ENCODE measurements at regions of chr16 and their contacts with region 1.

Region 1: DNA sequence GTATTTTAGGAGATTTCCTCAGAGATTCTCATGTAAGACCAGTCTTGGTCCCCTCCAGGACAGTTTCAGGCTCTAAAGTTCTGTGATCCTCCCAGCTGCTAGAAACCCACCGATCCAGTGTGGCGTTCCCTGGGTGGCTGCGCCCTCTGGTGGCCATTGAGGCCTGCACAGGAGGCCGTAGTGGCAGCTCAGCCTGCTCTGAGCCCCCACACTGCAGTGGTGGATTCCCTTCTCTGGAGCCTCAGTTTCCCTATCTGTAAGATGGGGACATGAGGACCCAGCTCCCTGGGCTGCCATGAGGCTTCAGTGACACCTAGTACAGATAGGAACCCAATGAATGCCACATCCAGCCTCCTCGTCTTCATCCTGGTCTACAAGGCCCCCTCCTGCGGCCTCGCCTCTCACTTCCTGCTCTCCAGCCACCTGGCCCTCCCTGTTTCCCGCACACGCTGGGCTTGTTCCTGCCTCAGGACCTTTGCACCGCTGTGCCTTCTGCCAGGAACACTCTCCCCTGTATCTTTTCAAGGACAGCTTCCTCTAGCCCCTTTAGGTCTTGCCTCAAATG is 16.5 kb downstream of the CCDC102A start:
- DNase-seq: peak; percentile 58 to 90 (median 83)
- ATAC-seq: peak; percentile 99
- H3K4me3 ChIP-seq: no peak overlapping the region
- H3K4me3 Mint-ChIP-seq: no peak overlapping the region
- H3K27ac ChIP-seq: no peak overlapping the region
- H3K27ac Mint-ChIP-seq: no peak overlapping the region
- H3K4me1 ChIP-seq: no peaks in the 10 kb centered on the region
- H3K4me1 Mint-ChIP-seq: peaks cover 6% of the 10 kb centered on the region
- H3K27me3 ChIP-seq: no peaks in the 10 kb centered on the region
- H3K27me3 Mint-ChIP-seq: no peaks in the 10 kb centered on the region
- CTCF ChIP-seq: peak; percentile 94

Region 2: DNA sequence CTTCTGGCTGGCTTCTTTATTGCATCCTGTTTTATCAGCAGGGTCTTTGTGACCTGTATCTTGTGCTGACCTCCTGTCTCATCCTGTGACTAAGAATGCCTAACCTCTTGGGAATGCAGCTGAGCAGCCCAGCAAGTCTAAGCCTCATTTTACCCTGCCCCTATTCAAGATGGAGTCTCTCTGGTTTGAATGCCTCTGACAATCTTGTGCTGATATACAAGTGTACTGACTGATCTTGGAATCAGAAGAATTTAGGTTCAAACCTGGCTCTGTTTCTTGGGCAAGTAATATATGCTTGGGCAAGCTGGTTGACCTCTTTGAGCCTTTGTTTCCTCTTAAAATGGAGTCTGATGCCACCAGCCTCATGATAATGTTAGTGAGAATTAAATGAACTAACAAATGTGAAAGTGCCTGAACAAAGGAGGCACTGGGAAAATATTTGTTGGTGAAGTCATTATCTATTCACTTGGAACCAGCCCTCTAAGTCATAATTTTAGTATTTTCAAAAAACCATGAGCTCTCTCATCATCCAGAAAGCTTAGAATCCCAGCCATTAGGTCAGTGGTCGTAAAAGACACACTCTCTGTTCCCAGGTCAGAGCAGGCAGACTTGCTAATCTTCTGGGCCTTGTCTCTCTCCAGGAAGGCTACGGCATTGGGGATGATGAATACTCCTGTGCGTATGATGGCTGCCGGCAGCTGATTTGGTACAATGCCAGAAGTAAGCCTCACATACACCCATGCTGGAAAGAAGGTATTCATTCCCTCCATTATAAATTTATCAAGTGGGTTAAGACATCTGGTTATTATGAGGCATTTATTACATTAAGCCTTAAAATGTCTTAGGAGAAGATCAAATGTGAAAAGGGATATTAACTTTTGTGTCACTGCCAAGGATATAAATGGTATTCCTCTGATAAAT is 292.9 kb before region 1 on chr16:
- CTCF ChIA-PET with region 1: no interaction called
- POLR2A ChIA-PET with region 1: no interaction called
- intact Hi-C with region 1: no loop called
- DNase-seq: no peak
- ATAC-seq: no peak
- H3K4me3 ChIP-seq: no peak overlapping the region
- H3K4me3 Mint-ChIP-seq: no peak overlapping the region
- H3K27ac ChIP-seq: no peak overlapping the region
- H3K27ac Mint-ChIP-seq: no peak overlapping the region
- H3K4me1 ChIP-seq: no peaks in the 10 kb centered on the region
- H3K4me1 Mint-ChIP-seq: no peaks in the 10 kb centered on the region
- H3K27me3 ChIP-seq: no peaks in the 10 kb centered on the region
- H3K27me3 Mint-ChIP-seq: no peaks in the 10 kb centered on the region
- CTCF ChIP-seq: no peak

Region 3: DNA sequence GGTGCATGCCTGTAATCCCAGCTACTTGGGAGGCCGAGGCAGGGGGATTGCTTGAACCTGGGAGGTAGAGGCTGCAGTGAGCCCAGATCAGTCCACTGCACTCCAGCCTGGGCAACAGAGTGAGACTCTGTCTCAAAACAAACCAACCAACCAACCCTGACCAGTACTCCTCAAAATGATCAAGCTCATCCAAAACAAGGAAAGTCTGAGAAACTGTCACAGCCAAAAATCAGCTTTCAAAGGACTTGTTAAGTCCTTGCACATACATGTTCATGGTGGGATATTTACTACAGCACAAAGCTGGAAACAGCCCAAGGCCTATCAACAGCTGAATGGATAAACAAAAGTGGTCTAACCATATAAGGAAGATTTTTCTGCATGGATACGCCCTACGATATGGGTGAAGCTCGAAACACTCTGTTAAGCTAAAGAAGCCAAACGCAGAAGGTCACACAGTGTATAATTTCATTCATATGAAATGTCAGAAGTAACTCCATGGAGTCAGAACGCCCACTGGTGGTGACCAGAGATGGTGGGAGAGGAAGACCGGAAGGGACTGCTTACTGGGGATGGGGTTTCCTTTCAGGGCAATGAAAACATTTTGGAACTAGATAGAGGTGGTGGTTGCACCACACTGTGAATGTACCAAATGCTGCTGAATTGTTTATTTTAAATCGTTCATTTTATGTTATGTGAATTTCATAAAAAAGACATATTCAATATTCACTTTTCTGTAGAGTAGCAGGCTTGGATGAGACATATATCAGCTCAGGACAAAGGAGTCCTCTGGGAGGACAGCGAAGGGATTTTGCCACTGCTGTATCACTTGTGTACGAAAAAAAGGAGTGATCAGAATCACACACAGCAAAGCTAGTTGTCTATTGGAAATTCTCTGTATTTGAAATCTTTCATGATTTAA is 97.6 kb before region 1 on chr16:
- CTCF ChIA-PET with region 1: interaction called, 137 read pairs
- POLR2A ChIA-PET with region 1: interaction called, 3 read pairs
- intact Hi-C with region 1: loop called in 1 of 2 experiments (anchors 1 kb)
- DNase-seq: no peak
- ATAC-seq: no peak
- H3K4me3 ChIP-seq: no peak overlapping the region
- H3K4me3 Mint-ChIP-seq: no peak overlapping the region
- H3K27ac ChIP-seq: no peak overlapping the region
- H3K27ac Mint-ChIP-seq: no peak overlapping the region
- H3K4me1 ChIP-seq: peaks cover 18% of the 10 kb centered on the region
- H3K4me1 Mint-ChIP-seq: peaks cover 19% of the 10 kb centered on the region
- H3K27me3 ChIP-seq: no peaks in the 10 kb centered on the region
- H3K27me3 Mint-ChIP-seq: no peaks in the 10 kb centered on the region
- CTCF ChIP-seq: no peak

Region 4: GRCh38 chr16:57475711-57476339 is 44.1 kb before region 1 on chr16:
- CTCF ChIA-PET with region 1: interaction called, 28 read pairs
- POLR2A ChIA-PET with region 1: interaction called, 5 read pairs
- intact Hi-C with region 1: loop called (anchors 1 kb)
- DNase-seq: peak in 8 of 9 experiments; percentile 44 to 84 (median 79)
- ATAC-seq: peak; percentile 98
- H3K4me3 ChIP-seq: peak overlapping the region in 1 of 2 experiments; percentile 21
- H3K4me3 Mint-ChIP-seq: peak overlapping the region; percentile 39
- H3K27ac ChIP-seq: no peak overlapping the region
- H3K27ac Mint-ChIP-seq: no peak overlapping the region
- H3K4me1 ChIP-seq: peaks cover 15% of the 10 kb centered on the region
- H3K4me1 Mint-ChIP-seq: peaks cover 13% of the 10 kb centered on the region
- H3K27me3 ChIP-seq: no peaks in the 10 kb centered on the region
- H3K27me3 Mint-ChIP-seq: no peaks in the 10 kb centered on the region
- CTCF ChIP-seq: peak; percentile 87

Region 5: DNA sequence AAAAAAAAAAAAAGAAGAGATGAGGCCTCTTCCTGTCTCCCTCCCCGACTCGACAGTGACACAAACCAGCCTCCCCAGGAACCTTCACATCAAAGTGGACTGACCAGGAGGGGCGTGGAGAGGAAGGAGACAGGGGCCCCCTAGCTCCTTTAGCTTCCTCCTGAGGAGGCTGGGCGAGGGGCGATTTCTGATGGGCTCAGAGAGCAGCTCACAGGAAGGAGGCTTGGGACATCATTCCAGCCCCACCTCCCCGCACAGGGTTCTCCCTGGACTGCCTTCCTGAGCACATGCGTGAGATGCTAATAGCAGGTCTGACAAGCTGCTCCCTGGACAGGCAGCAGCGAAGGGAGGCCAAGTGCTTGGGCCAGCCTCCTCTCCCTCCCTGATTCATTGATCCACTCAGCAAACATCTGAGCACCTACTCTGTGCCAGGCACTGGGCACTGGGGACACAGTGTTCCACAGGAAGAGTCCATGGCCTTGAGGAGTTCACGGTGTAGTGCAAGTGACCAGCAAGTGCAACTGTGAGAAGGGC is 19.2 kb before region 1 on chr16:
- CTCF ChIA-PET with region 1: interaction called, 21 read pairs
- POLR2A ChIA-PET with region 1: interaction called, 4 read pairs
- intact Hi-C with region 1: no loop called
- DNase-seq: peak in 1 of 9 experiments; percentile 34
- ATAC-seq: no peak
- H3K4me3 ChIP-seq: no peak overlapping the region
- H3K4me3 Mint-ChIP-seq: no peak overlapping the region
- H3K27ac ChIP-seq: no peak overlapping the region
- H3K27ac Mint-ChIP-seq: no peak overlapping the region
- H3K4me1 ChIP-seq: peaks cover 16% of the 10 kb centered on the region
- H3K4me1 Mint-ChIP-seq: peaks cover 10% of the 10 kb centered on the region
- H3K27me3 ChIP-seq: no peaks in the 10 kb centered on the region
- H3K27me3 Mint-ChIP-seq: peaks cover 4% of the 10 kb centered on the region
- CTCF ChIP-seq: no peak

Region 6: DNA sequence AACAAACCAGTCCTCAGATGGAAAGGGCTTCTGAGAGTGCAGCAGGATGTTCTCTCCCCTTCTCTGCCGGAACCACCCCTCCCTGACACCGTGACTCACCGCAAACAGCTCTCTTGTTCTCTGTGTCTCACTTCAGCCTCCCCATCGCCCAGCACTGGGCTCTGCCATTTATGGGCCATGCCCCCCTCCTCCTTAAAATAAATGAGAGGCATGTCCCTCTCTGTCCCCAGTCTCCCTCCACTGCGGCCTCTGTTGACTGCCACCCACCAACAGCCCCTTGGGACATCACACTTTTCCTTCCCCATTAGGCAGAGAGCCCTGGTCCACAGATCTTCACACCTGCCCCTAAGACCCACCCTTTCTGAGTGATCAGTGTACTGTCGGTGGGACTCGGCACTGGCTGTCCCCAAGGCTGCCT is 10.2 kb after region 1 on chr16:
- CTCF ChIA-PET with region 1: interaction called, 43 read pairs
- POLR2A ChIA-PET with region 1: no interaction called
- intact Hi-C with region 1: no loop called
- DNase-seq: peak; percentile 26 to 89 (median 81)
- ATAC-seq: peak; percentile 87
- H3K4me3 ChIP-seq: peak overlapping the region; percentile 25 to 33
- H3K4me3 Mint-ChIP-seq: peak overlapping the region; percentile 78
- H3K27ac ChIP-seq: peak overlapping the region; percentile 37 to 88
- H3K27ac Mint-ChIP-seq: peak overlapping the region; percentile 94
- H3K4me1 ChIP-seq: peaks cover 60% of the 10 kb centered on the region
- H3K4me1 Mint-ChIP-seq: peaks cover 58% of the 10 kb centered on the region
- H3K27me3 ChIP-seq: no peaks in the 10 kb centered on the region
- H3K27me3 Mint-ChIP-seq: no peaks in the 10 kb centered on the region
- CTCF ChIP-seq: no peak

Region 7: DNA sequence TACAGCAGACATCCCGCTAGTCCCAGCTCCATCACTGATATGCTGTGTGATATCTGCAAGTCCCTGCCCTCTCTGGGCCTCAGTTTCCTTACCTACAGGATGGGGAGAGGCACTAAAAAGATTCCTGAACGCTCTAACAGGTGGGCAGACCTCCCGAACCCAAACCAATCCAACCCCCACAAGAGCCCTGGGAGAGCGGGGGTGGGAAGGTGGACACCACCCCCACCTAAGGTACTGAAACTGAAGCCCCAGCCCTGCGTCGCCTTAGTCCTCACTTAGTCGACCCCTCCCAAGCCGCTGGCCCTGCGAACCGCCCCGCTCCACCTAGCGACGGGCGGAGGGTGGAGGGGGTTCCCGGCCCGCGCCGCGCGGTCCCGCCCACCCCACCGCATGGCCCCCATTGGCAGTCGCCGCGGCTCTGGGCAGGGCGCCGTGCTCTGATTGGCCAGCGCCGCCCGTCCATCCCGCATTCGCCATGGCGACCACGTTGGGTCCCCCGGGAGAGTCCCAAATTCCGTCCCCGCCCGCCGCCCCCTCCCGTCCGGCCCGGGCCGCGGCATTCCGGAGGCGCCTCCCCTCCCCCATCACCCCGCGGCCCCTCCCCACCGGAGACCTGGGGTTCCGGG is 15.9 kb after region 1 on chr16:
- CTCF ChIA-PET with region 1: interaction called, 43 read pairs
- POLR2A ChIA-PET with region 1: no interaction called
- intact Hi-C with region 1: loop called in 1 of 2 experiments (anchors 2 kb)
- DNase-seq: peak; percentile 83 to 97 (median 92)
- ATAC-seq: peak; percentile 82
- H3K4me3 ChIP-seq: peak overlapping the region; percentile 69 to 80
- H3K4me3 Mint-ChIP-seq: peak overlapping the region; percentile 81
- H3K27ac ChIP-seq: peak overlapping the region; percentile 64 to 96
- H3K27ac Mint-ChIP-seq: peak overlapping the region; percentile 96
- H3K4me1 ChIP-seq: peaks cover 81% of the 10 kb centered on the region
- H3K4me1 Mint-ChIP-seq: peaks cover 70% of the 10 kb centered on the region
- H3K27me3 ChIP-seq: no peaks in the 10 kb centered on the region
- H3K27me3 Mint-ChIP-seq: no peaks in the 10 kb centered on the region
- CTCF ChIP-seq: no peak

Region 8: DNA sequence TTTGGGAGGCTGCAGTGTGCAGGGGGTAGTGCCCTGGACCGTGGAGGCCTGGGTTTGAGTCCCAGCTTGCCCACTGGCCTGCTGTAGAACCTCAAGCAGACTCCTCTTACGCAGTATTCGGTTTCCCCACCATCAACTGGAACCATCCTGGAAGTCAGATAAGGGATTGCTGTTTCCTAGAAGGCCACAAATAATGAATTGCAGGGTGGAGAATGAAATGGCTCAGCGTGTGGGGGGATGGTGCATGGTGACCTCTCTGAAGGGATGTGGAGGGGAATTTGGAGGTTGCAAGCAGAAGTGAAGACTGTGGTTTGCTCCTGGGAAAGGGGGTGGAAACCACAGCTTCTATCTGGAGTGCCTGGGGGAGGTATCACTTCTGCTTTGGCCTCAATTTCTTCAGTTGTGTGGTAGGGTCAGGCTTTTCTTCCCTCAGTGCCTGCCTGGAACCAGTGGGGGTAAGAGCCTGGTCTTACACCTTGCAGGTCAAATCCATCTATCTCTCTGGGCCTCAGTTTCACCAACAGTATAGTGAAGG is 24.3 kb after region 1 on chr16:
- CTCF ChIA-PET with region 1: interaction called, 15 read pairs
- POLR2A ChIA-PET with region 1: interaction called, 6 read pairs
- intact Hi-C with region 1: no loop called
- DNase-seq: peak in 3 of 9 experiments; percentile 47 to 67 (median 50)
- ATAC-seq: no peak
- H3K4me3 ChIP-seq: peak overlapping the region in 1 of 2 experiments; percentile 72
- H3K4me3 Mint-ChIP-seq: peak overlapping the region; percentile 73
- H3K27ac ChIP-seq: peak overlapping the region in 1 of 2 experiments; percentile 29
- H3K27ac Mint-ChIP-seq: peak overlapping the region; percentile 64
- H3K4me1 ChIP-seq: peaks cover 46% of the 10 kb centered on the region
- H3K4me1 Mint-ChIP-seq: peaks cover 52% of the 10 kb centered on the region
- H3K27me3 ChIP-seq: no peaks in the 10 kb centered on the region
- H3K27me3 Mint-ChIP-seq: no peaks in the 10 kb centered on the region
- CTCF ChIP-seq: no peak

Measured in CD8-positive, alpha-beta T cell (primary cell).